Right ventricle myocardium inferior (tissue), 1 donor: ENCODE measurements at regions of chr19 and their contacts with region 1.

Region 1: GRCh38 chr19:47619763-47620162 is 10.8 kb downstream of the BICRA start:
- DNase-seq: no peak
- ATAC-seq: no peak

Region 2: DNA sequence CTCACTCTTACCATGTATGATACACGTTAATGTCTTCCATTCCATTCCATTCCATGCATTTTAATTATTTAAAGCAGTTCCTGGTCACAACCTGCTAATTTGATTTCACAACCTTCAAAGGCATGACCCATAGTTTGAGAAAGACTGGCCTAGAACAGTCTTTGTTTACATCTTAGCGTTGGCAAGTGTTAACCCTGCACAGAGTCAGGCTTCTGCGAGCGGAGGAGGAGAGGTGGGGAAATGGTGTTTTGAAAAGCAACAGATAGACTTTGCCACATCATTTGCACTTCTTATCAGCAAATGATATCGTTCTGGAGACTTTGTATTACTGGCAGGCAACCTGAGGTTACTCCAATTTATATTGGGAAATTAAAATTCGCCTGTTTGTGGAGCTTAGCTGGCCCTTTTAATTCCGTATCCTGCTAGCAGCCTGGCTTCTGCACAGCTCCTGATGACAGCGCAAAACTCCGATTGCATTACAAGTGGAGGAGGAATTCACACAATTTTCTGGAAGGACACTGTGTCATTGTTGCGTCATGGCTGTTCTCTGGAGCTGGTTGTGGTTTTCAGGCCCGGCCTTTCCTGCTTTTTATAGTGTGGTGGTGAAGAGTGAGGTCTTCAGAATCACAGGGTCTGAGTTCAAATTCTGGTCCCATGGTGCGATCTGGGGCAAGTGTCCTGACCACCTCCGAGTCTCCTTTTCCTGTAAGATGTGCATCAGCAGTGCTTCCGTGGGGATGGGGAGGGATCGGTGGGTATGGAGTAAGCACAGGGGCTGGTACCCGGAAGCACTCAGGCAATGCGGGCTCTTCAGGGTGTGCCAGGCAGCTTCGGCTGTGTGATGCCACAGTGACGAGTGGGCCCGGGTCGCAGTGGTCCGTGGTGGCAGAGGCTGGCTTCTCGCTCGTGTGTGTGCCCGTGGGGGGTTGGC is 44.3 kb after region 1 on chr19:
- intact Hi-C with region 1: loop called (anchors 5 kb)
- DNase-seq: peak; percentile 84
- ATAC-seq: peak; percentile 81